ENCODE measurements at regions of chr15 and their contacts with region 1.

Region 1: DNA sequence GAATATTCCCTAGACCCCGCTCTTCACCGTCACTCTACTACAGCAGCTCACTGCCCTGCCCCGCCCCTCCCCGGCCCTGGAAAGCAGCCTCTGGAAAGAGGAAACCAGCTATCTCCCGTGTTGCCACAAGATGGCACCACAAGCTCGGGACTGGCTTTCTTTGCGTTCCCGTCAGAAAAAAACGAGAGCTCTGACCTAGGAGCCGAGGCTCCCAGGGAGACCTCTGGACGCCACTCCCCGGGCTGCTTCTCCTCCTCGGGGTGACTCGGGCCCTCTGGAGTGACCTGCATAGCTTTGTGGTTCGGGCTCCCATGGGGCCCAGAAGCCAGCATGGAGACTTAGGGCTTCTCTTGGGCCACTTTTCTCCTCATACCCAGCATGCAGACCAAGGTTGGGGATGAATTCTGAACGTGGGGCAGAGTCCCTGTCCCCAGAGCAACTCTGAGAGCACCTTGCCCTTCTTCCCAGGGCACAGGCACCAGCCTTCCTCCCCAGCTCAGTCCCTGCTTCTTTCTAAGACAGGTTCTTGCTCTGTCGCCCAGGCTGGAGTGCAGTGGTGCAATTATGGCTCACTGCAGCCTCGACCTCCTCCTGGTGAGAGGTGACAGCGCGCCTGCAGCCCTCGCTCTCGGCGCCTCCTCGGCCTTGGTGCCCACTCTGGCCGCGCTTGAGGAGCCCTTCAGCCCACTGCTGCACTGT is 19.0 kb downstream of the STOML1 start:
- DNase-seq: peak; percentile 92
- H3K4me3 ChIP-seq: peak overlapping the region in 4 of 8 donors; percentile 2 to 45 (median 21)
- H3K27ac ChIP-seq: peak overlapping the region in 1 of 8 donors; percentile 41
- H3K4me1 ChIP-seq: peaks cover 0 to 22% (median 10%) of the 10 kb centered on the region in 6 donors
- H3K27me3 ChIP-seq: peaks cover 0 to 32% (median 0%) of the 10 kb centered on the region in 7 donors
- CTCF ChIP-seq: peak; percentile 74 to 95 (median 90)
- POLR2A ChIP-seq: no peak

Region 2: GRCh38 chr15:73908030-73908821 is 64.9 kb before region 1 on chr15:
- intact Hi-C with region 1: no loop called
- DNase-seq: peak; percentile 93
- H3K4me3 ChIP-seq: no peak overlapping the region
- H3K27ac ChIP-seq: no peak overlapping the region
- H3K4me1 ChIP-seq: peaks cover 0 to 5% (median 2%) of the 10 kb centered on the region in 6 donors
- H3K27me3 ChIP-seq: peaks cover 0 to 6% (median 0%) of the 10 kb centered on the region in 7 donors
- CTCF ChIP-seq: peak; percentile 69 to 98 (median 90)
- POLR2A ChIP-seq: no peak

Region 3: DNA sequence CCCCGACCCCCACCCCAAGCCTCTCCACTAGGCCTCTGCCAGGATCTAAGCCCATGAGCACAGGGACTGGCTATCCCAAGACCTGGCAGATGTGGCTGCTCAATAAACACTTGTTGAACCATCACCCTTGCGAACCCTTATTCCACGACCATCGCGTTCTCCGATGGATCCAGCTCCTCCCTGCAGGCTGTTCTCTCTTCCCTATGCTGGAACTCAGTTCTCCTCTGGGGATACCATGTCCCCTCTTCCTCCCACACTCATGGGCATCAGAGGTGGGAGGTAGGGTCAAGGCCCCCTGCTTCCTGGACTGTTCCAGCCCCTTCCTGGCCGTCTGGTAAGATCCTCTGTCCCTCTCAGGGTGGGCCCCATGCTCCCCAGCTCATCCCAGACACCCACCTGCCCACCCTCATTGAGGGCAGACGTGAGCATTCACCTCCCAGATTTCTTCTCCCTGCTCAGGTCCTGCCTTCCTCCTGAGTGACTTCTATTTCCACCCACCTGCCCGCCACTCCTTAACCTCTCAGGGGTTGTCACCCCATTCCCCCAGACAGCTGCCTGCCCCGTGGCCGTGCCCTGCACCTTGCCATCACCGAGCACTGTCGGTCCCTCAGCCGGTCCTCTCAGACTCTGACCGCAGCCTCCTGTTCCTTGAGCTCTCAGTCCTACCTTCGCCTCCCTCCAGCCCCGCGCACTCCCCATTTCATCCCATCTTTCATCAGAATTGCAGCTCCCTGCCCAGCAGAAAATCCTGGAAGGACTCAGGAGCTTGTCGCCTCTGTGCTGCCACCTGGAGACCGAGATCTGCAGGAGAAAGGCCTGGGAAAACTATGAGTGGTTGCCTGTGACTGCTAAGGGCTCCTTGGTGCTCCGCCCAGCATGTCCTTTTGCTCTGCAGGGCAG is 63.4 kb after region 1 on chr15:
- intact Hi-C with region 1: loop called (anchors 10 kb)
- DNase-seq: no peak
- H3K4me3 ChIP-seq: no peak overlapping the region
- H3K27ac ChIP-seq: peak overlapping the region in 1 of 8 donors; percentile 16
- H3K4me1 ChIP-seq: peaks cover 0 to 52% (median 15%) of the 10 kb centered on the region in 6 donors
- H3K27me3 ChIP-seq: no peaks in the 10 kb centered on the region
- CTCF ChIP-seq: peak in 8 of 11 experiments; percentile 10 to 48 (median 32)
- POLR2A ChIP-seq: no peak

Region 4: DNA sequence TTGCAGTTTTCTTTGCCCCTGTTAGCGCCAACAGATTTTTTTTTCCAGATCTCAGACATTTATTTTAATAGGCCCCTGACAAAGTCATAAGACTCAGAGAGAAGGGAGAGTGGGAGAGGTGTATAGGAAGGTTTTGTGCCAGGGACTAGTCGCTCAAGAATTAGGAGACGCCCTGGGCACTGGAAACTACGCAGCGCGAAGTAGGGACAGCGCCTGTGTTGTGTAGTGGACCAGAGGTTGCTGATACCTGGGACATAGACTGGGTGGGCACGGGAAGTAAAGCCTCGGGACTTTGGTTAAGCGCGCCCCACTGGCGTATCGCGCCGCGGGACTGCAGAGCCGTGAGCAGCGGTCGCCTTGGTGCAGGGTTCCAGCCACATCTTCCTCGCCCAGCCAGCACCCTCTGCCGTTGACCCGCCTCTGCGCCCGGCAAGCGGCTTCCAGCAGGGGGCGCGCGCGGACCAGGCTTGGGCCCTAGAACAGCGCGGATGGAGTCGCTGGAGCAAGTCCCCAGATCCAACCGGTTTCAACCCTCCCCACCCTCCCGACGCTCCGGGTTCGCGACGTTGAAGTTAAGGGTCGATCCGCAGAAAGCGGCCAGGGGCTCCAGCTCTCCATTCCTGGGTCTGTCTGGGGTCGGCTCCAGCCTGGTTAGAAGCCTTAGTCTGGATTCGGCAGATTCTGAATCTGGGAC is 154.3 kb after region 1 on chr15:
- intact Hi-C with region 1: loop called (anchors 10 kb)
- DNase-seq: peak; percentile 96
- H3K4me3 ChIP-seq: peak overlapping the region in 6 of 8 donors; percentile 13 to 65 (median 30)
- H3K27ac ChIP-seq: no peak overlapping the region
- H3K4me1 ChIP-seq: peaks cover 19 to 72% (median 51%) of the 10 kb centered on the region in 6 donors
- H3K27me3 ChIP-seq: peaks cover 3 to 86% (median 53%) of the 10 kb centered on the region in 7 donors
- CTCF ChIP-seq: peak; percentile 80 to 98 (median 94)
- POLR2A ChIP-seq: no peak

Region 5: DNA sequence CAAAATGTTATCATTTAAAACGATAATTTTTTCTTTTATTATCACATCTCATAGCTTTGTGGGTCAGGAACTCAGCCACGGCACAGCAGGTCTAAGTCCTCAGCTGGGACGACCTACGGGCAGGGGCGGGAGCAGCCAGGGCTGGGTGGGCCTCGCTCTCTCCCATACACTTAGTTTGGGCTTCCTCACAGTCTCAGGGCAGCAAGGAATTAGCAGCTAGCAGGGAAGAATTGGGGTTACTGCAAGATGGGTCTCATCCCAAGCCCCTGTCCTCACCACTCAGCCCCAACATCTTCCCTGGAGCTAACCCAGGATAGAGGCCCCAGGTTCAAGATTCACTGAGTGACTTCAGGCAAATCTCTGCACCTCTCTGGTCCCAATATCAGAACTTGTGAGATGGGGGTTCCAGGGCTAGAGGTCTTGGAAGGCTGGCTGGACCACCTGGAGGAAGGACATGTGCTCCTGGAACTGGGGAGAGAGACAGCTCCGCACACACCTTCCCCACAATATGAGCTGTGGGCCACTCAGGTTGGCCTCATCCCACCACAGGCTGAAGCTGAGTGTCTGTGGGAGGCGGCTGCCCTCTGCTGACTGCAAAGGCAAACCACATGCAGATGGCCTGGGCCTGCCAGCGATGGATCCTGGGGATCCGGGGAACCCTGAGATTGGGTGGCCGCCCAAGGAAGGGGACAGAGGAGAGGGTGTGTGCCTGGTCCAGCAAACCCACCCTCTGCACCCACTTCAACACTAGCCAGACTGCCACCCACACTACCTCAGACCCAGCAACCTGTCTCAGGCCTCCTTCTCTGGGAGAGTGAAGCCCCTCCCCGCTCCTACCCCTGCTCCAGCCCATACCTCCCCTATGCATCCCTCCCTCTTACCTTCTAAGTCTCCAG is 349.3 kb after region 1 on chr15:
- intact Hi-C with region 1: loop called (anchors 5 kb)
- DNase-seq: peak; percentile 89
- H3K4me3 ChIP-seq: no peak overlapping the region
- H3K27ac ChIP-seq: no peak overlapping the region
- H3K4me1 ChIP-seq: peaks cover 5 to 60% (median 20%) of the 10 kb centered on the region in 6 donors
- H3K27me3 ChIP-seq: no peaks in the 10 kb centered on the region
- CTCF ChIP-seq: peak; percentile 65 to 90 (median 82)
- POLR2A ChIP-seq: no peak

Measured in spleen (tissue), 13 donors.